Activated CD8-positive, alpha-beta memory T cell treated with anti-CD3 and anti-CD28 coated beads, Interleukin-2, amount 10 ng/mL, durations not matched to agents 7 days and 5 days (primary cell): ENCODE measurements at regions of chr1 and their contacts with region 1.

Region 1: GRCh38 chr1:110872745-110873720 is at the start of gene CD53:
- DNase-seq: peak; percentile 75
- ATAC-seq: peak; percentile 40
- H3K4me3 Mint-ChIP-seq: peak within 1 kb of the TSS; percentile 92
- H3K27ac Mint-ChIP-seq: peak within 1 kb of the TSS; percentile 92
- H3K4me1 Mint-ChIP-seq: peaks cover 28% of the 10 kb centered on the region
- H3K27me3 Mint-ChIP-seq: no peaks in the 10 kb centered on the region
- total RNA-seq, gene CD53: 403 to 439 TPM

Region 2: GRCh38 chr1:110948038-110948810 is 75.2 kb after region 1 on chr1:
- CTCF ChIA-PET with region 1: no interaction called
- DNase-seq: no peak
- ATAC-seq: no peak
- H3K4me3 Mint-ChIP-seq: no peak overlapping the region
- H3K27ac Mint-ChIP-seq: no peak overlapping the region
- H3K4me1 Mint-ChIP-seq: peaks cover 10% of the 10 kb centered on the region
- H3K27me3 Mint-ChIP-seq: no peaks in the 10 kb centered on the region

Region 3: DNA sequence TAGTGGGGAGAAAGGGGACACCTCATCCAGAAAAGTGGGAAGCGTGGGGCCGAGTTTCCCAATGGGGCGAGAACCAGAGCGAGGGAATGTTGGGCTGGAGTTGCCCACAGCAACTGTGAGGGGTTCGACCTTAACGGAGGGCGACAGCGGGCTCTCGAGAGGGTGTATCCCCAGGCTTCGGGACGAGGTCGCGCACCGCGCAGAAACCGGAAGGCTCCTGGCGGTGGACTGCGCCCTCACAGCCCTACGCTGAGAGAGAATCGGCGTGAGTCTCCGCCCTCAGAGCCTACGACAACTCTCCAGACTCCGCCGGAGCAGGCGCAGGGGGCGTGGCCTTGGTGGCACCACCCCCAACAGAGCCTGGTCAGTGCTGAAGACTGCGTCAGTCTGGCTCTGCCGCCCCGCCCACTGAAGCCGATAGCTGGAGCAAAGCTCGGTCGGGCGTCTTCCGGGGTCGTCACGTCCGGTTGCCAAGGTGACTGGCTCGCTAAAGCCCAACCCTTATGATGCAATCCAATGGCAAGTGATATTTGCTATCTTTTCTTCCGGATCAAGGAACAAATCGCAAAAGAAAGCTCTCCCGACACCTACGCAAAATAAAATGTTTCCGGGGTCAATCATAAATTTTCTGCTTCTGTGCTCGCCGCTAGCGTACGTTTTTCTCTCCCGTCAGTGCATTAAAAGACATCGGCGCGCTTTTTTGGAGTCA is 90.8 kb after region 1 on chr1 and contains the start of gene LRIF1:
- CTCF ChIA-PET with region 1: interaction called, 10 read pairs
- DNase-seq: peak; percentile 100
- ATAC-seq: peak; percentile 99
- H3K4me3 Mint-ChIP-seq: peak within 1 kb of the TSS; percentile 80
- H3K27ac Mint-ChIP-seq: peak within 1 kb of the TSS; percentile 93
- H3K4me1 Mint-ChIP-seq: peaks cover 37% of the 10 kb centered on the region
- H3K27me3 Mint-ChIP-seq: peaks cover 11% of the 10 kb centered on the region
- total RNA-seq, gene LRIF1: 20.7 to 21.3 TPM